GM12878 (cell line): ENCODE measurements at regions of chr20 and their contacts with region 1.

Region 1: GRCh38 chr20:32789896-32790750 is 27.9 kb downstream of the DNMT3B start:
- DNase-seq: peak; percentile 13
- ATAC-seq: peak; percentile 87
- H3K4me3 ChIP-seq: no peak overlapping the region
- H3K27ac ChIP-seq: no peak overlapping the region; the same call in 1 of the 2 replicates
- H3K4me1 ChIP-seq: peaks cover 24% of the 10 kb centered on the region
- H3K27me3 ChIP-seq: no peaks in the 10 kb centered on the region
- CTCF ChIP-seq: peak; percentile 99; a peak in 5 of 6 replicates
- EP300 ChIP-seq: no peak
- POLR2A ChIP-seq: no peak
- RAD21 ChIP-seq: peak; percentile 97

Region 2: DNA sequence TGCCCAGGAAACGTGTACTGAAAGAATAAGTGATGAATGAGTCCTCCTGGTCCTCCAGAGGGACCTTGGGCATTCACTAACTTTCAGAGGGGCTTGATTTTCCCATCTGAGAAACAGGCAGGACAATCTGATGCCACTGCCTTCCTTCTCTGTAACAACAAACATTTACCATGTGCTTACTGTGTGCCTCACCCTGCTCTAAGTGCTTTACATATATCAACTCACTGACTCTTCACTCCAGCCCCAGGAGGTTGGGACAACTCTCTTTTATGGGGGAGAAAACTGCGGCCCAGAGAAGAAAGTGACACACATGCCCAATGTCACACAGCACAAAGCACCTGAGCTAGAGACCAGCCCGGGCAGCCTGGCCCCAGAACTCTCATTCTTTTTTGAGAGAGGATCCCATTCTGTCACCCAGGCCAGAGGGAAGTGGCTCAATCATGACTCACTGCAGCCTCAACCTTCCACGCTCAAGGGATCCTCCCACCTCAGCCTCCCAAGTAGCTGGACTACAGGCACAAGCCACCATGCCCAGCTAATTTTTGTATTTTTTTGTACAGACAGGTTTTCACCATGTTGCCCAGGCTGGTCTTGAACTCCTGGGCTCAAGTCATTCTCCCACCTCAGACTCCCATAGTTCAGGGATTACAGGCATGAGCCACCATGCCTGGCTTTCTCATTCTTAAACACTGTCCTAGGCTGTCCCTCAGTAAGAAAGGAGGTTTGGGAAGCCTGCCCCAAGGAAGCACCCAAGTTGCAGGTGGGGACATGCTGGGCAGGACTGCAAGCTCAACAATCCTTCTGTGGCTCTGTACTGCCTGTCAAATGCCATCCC is 243.0 kb before region 1 on chr20:
- CTCF ChIA-PET with region 1: no interaction called
- POLR2A ChIA-PET with region 1: no interaction called
- RAD21 ChIA-PET with region 1: no interaction called
- SMC1A ChIA-PET with region 1: no interaction called
- in situ Hi-C with region 1: no loop called
- intact Hi-C with region 1: no loop called
- DNase-seq: no peak
- ATAC-seq: no peak
- H3K4me3 ChIP-seq: no peak overlapping the region
- H3K27ac ChIP-seq: no peak overlapping the region
- H3K4me1 ChIP-seq: no peaks in the 10 kb centered on the region
- H3K27me3 ChIP-seq: no peaks in the 10 kb centered on the region
- CTCF ChIP-seq: no peak
- EP300 ChIP-seq: no peak
- POLR2A ChIP-seq: no peak
- RAD21 ChIP-seq: no peak

Region 3: GRCh38 chr20:32674362-32674789 is 115.7 kb before region 1 on chr20:
- CTCF ChIA-PET with region 1: interaction called, 19 read pairs
- POLR2A ChIA-PET with region 1: no interaction called
- RAD21 ChIA-PET with region 1: interaction called, 3 read pairs
- SMC1A ChIA-PET with region 1: interaction called, 3 read pairs
- in situ Hi-C with region 1: no loop called
- intact Hi-C with region 1: no loop called
- DNase-seq: no peak
- ATAC-seq: peak; percentile 69
- H3K4me3 ChIP-seq: no peak overlapping the region
- H3K27ac ChIP-seq: no peak overlapping the region
- H3K4me1 ChIP-seq: peaks cover 38% of the 10 kb centered on the region
- H3K27me3 ChIP-seq: no peaks in the 10 kb centered on the region
- CTCF ChIP-seq: peak; percentile 74 to 86 (median 85)
- EP300 ChIP-seq: no peak
- POLR2A ChIP-seq: no peak
- RAD21 ChIP-seq: peak; percentile 94

Region 4: GRCh38 chr20:32727683-32728082 is 62.4 kb before region 1 on chr20:
- CTCF ChIA-PET with region 1: no interaction called
- POLR2A ChIA-PET with region 1: no interaction called
- RAD21 ChIA-PET with region 1: no interaction called
- SMC1A ChIA-PET with region 1: no interaction called
- in situ Hi-C with region 1: no loop called
- intact Hi-C with region 1: no loop called
- DNase-seq: no peak
- ATAC-seq: no peak
- H3K4me3 ChIP-seq: no peak overlapping the region
- H3K27ac ChIP-seq: no peak overlapping the region
- H3K4me1 ChIP-seq: peaks cover 7% of the 10 kb centered on the region
- H3K27me3 ChIP-seq: no peaks in the 10 kb centered on the region
- CTCF ChIP-seq: no peak
- EP300 ChIP-seq: no peak
- POLR2A ChIP-seq: no peak
- RAD21 ChIP-seq: no peak

Region 5: DNA sequence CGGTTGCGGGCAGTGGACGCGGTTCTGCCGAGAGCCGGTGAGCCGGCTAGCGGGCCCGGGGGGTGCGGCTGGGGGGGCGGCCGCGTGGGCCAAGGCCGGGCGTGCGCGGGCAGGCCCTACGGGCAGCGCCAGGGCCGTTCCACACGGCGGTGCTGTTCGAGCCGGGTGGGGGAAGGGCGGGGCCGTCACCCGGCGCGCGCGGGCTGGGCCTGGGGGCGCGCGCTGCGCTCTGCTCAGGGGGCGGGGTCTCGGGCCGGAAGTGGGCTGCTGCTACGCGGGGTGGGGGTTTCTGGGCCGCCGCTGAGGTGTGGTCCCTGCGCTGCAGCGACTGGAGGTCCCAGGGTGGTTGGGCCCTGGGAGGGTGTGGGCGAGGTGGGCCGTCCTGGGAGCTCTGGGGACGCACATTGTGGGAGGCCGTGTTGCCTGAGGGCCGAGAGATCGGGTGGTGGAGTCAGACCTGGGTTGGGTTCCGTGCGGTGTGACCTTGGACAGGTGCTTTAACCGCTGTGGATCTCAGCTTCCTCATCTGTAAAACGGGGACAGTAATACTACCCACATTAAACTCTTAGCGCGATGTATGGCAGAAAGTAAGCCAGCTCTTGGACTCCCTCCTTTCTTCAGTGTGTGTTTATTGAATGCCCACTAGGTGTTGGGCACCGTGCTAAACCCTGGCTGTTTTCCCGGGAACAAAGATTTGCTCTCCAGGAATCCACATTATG is 30.0 kb after region 1 on chr20:
- CTCF ChIA-PET with region 1: interaction called, 9 read pairs
- POLR2A ChIA-PET with region 1: interaction called, 4 read pairs
- RAD21 ChIA-PET with region 1: interaction called, 14 read pairs
- SMC1A ChIA-PET with region 1: interaction called, 6 read pairs
- in situ Hi-C with region 1: no loop called
- intact Hi-C with region 1: no loop called
- DNase-seq: no peak
- ATAC-seq: peak; percentile 88
- H3K4me3 ChIP-seq: peak overlapping the region; percentile 79
- H3K27ac ChIP-seq: peak overlapping the region; percentile 63
- H3K4me1 ChIP-seq: peaks cover 6% of the 10 kb centered on the region
- H3K27me3 ChIP-seq: no peaks in the 10 kb centered on the region
- CTCF ChIP-seq: no peak
- EP300 ChIP-seq: no peak
- POLR2A ChIP-seq: peak; percentile 75
- RAD21 ChIP-seq: no peak

Region 6: DNA sequence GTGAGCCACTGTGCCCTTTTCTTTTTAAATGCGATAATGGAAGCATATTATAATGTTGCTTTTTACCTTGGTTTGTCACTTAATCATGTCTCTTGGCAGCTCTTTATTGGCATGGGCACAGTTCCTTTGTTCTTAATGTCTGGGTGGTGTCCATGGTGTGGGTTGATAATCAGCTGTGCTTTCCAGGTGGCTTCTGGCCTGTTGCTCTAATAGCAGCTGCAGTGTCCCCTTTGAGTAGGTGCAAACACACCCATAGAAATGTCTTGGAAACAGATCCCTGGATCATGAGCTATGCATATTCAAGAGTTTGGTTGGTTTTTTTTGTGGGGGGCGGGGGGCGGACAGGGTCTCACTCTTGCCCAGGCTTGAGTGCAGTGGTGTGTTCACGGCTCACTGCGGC is 98.5 kb after region 1 on chr20:
- CTCF ChIA-PET with region 1: interaction called, 49 read pairs
- POLR2A ChIA-PET with region 1: no interaction called
- RAD21 ChIA-PET with region 1: interaction called, 7 read pairs
- SMC1A ChIA-PET with region 1: no interaction called
- in situ Hi-C with region 1: no loop called
- intact Hi-C with region 1: no loop called
- DNase-seq: no peak
- ATAC-seq: no peak
- H3K4me3 ChIP-seq: no peak overlapping the region
- H3K27ac ChIP-seq: no peak overlapping the region
- H3K4me1 ChIP-seq: no peaks in the 10 kb centered on the region
- H3K27me3 ChIP-seq: no peaks in the 10 kb centered on the region
- CTCF ChIP-seq: no peak
- EP300 ChIP-seq: no peak
- POLR2A ChIP-seq: no peak
- RAD21 ChIP-seq: no peak

Region 7: GRCh38 chr20:32902456-32903420 is 112.6 kb after region 1 on chr20:
- CTCF ChIA-PET with region 1: interaction called, 49 read pairs
- POLR2A ChIA-PET with region 1: no interaction called
- RAD21 ChIA-PET with region 1: interaction called, 6 read pairs
- SMC1A ChIA-PET with region 1: interaction called, 6 read pairs
- in situ Hi-C with region 1: no loop called
- intact Hi-C with region 1: no loop called
- DNase-seq: no peak
- ATAC-seq: peak; percentile 94
- H3K4me3 ChIP-seq: no peak overlapping the region
- H3K27ac ChIP-seq: no peak overlapping the region
- H3K4me1 ChIP-seq: no peaks in the 10 kb centered on the region
- H3K27me3 ChIP-seq: no peaks in the 10 kb centered on the region
- CTCF ChIP-seq: peak; percentile 89 to 96 (median 93)
- EP300 ChIP-seq: no peak
- POLR2A ChIP-seq: no peak
- RAD21 ChIP-seq: peak; percentile 91

Region 8: GRCh38 chr20:33097001-33097400 is 306.9 kb after region 1 on chr20:
- CTCF ChIA-PET with region 1: interaction called, 7 read pairs
- POLR2A ChIA-PET with region 1: no interaction called
- RAD21 ChIA-PET with region 1: interaction called, 4 read pairs
- SMC1A ChIA-PET with region 1: interaction called, 3 read pairs
- in situ Hi-C with region 1: no loop called
- intact Hi-C with region 1: loop called (anchors 2 kb)
- DNase-seq: no peak
- ATAC-seq: no peak
- H3K4me3 ChIP-seq: no peak overlapping the region
- H3K27ac ChIP-seq: no peak overlapping the region
- H3K4me1 ChIP-seq: no peaks in the 10 kb centered on the region
- H3K27me3 ChIP-seq: no peaks in the 10 kb centered on the region
- CTCF ChIP-seq: no peak
- EP300 ChIP-seq: no peak
- POLR2A ChIP-seq: no peak
- RAD21 ChIP-seq: no peak